Left lung (tissue), 14 donors: ENCODE measurements at regions of chr2 and their contacts with region 1.

Region 1: DNA sequence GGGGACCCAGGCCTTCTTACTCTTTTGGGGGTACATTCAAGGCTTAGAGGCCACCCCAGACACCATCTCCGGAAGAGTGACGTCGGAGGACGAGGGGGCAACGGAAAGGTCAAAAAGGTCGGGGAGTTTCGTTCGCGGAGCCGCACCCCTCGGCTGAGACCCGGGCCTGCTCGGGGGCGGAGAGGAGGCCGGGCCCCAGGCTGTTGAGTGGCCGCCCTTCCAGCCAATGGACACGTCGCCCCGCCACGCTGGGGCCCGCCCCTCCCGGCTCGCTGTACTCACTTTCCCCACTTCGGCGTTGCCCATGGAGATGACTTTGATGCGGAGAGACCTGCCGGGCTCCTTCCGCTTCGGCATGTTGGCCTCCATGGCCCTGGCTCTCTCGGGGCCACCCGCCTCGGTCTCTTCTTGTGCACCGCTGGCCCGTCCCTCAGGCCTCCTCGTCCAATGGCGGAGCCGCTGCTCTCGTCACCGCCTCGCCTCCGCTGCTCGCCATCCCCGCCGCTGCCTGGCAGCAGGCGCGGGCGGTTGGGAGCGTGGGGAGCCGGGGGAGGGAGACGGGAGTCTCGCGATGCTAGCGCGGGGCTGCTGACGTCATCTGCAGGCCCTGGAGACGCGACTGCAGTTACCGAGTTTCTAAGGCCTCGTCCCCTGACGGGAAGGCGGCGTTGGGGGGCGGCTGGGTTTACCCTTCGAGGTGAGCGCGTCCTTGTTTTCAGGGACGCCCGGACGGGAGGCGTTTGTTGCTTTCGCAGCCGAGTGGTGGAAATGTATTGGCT is at the start of gene DNAJC27:
- DNase-seq: peak; percentile 98 to 99 (median 99)
- ATAC-seq: peak; percentile 97
- H3K4me3 ChIP-seq: peak within 1 kb of the TSS; percentile 57 to 72
- H3K27ac ChIP-seq: peak within 1 kb of the TSS; percentile 99
- H3K4me1 ChIP-seq: peaks cover 5 to 13% of the 10 kb centered on the region in 2 donors
- H3K27me3 ChIP-seq: no peaks in the 10 kb centered on the region
- CTCF ChIP-seq: no peak
- polyA plus RNA-seq, gene DNAJC27: 9.5 to 11.9 (median 10.9) TPM

Region 2: DNA sequence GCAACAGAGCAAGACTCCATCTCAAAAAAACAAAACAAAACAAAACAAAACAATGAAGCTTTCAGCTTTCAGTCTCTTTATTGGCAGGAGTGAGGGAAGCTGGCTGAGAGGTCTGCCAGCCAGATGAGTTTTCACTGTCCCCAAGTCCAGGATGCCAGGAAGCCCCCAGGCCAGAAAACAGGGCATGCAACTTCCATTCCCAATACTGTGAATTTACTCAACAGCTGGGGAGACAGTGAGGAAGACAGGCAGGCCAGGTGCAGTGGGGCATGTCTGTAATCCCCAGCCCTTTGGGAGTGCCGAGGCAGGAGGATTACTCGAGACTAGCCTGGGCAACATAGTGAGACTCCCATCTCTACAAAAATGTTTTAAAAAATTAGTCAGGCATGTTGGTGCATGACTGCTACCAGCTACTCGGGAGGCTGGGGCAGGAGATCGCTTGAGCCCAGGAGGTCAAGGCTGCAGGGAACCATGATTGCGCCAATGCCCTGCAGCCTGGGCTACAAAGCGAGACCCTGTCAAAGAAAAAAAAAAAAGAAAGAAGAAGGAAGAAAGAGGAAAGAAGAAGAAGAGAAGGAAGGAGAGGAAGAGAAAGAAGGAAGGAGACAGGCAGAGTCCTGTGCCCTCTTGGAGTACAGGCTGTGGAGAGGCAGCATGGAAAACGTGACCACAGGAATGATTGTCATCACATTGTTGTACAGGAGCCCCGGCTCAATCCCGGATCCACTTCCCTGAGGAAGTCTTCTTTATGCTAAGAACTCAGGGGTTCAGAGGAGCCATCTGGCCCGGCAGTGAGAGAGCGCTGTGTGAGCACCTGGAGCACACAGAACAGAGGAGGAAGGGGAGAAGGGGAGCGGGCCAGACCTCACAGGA is 225.8 kb after region 1 on chr2:
- intact Hi-C with region 1: loop called in 1 of 2 experiments (anchors 10 kb)
- DNase-seq: no peak
- ATAC-seq: no peak
- H3K4me3 ChIP-seq: no peak overlapping the region
- H3K27ac ChIP-seq: no peak overlapping the region
- H3K4me1 ChIP-seq: peaks cover 0 to 6% of the 10 kb centered on the region in 2 donors
- H3K27me3 ChIP-seq: no peaks in the 10 kb centered on the region
- CTCF ChIP-seq: no peak